ENCODE measurements at regions of chr12 and their contacts with region 1.

Region 1: GRCh38 chr12:6944381-6945186 is 762 bp downstream of the C12orf57 start:
- DNase-seq: peak; percentile 92 to 93
- H3K4me3 ChIP-seq: peak overlapping the region; percentile 70 to 80 (median 78)
- H3K27ac ChIP-seq: peak overlapping the region; percentile 96 to 97
- H3K4me1 ChIP-seq: peaks cover 14 to 22% of the 10 kb centered on the region in 2 donors
- H3K27me3 ChIP-seq: no peaks in the 10 kb centered on the region
- CTCF ChIP-seq: peak; percentile 94 to 97 (median 95)
- POLR2A ChIP-seq: peak; percentile 7

Region 2: GRCh38 chr12:6890789-6891645 is 53.6 kb before region 1 on chr12:
- intact Hi-C with region 1: loop called (anchors 2 kb)
- DNase-seq: peak; percentile 96 to 98
- H3K4me3 ChIP-seq: peak overlapping the region; percentile 44 to 69 (median 62)
- H3K27ac ChIP-seq: peak overlapping the region; percentile 93 to 94
- H3K4me1 ChIP-seq: peaks cover 0 to 3% of the 10 kb centered on the region in 2 donors
- H3K27me3 ChIP-seq: no peaks in the 10 kb centered on the region
- CTCF ChIP-seq: peak; percentile 69 to 93 (median 74)
- POLR2A ChIP-seq: peak; percentile 43

Region 3: GRCh38 chr12:7113389-7113871 is 168.8 kb after region 1 on chr12:
- intact Hi-C with region 1: loop called (anchors 10 kb)
- DNase-seq: no peak
- H3K4me3 ChIP-seq: no peak overlapping the region
- H3K27ac ChIP-seq: peak overlapping the region in 1 of 2 donors; percentile 57
- H3K4me1 ChIP-seq: no peaks in the 10 kb centered on the region
- H3K27me3 ChIP-seq: no peaks in the 10 kb centered on the region
- CTCF ChIP-seq: peak; percentile 78 to 91 (median 81)
- POLR2A ChIP-seq: no peak